ENCODE measurements at regions of chr4 and their contacts with region 1.

Region 1: GRCh38 chr4:87353592-87353991 is 30.9 kb upstream of the HSD17B13 start:
- DNase-seq: peak; percentile 51
- CTCF ChIP-seq: peak; percentile 66

Region 2: GRCh38 chr4:87304671-87305432 is 48.7 kb before region 1 on chr4:
- CTCF ChIA-PET with region 1: no interaction called
- POLR2A ChIA-PET with region 1: no interaction called
- DNase-seq: no peak
- CTCF ChIP-seq: no peak

Region 3: DNA sequence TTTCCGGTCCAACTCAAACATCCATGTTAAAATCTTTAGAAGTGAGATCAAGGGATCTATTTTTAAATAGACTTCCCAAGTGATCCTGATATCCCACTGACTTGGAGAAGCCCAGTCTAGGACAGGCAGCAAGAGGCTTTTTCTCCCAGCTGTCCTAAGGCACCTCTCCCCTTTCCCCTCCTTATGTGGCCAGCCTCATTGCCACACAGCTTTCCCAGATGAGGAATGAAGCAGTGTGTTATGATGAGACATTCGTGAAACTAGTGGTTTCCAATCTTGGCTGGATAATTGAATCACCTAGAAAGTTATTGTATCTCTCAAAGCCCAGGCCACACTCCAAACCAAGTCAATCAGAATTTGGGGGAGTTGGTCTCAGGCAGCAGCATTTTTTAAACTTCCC is 14.2 kb before region 1 on chr4:
- CTCF ChIA-PET with region 1: interaction called, 14 read pairs
- POLR2A ChIA-PET with region 1: no interaction called
- DNase-seq: no peak
- CTCF ChIP-seq: no peak

Region 4: GRCh38 chr4:87465739-87466366 is 112.3 kb after region 1 on chr4:
- CTCF ChIA-PET with region 1: interaction called, 21 read pairs
- POLR2A ChIA-PET with region 1: no interaction called
- DNase-seq: peak; percentile 47
- CTCF ChIP-seq: peak; percentile 40